ENCODE measurements at regions of chr22 and their contacts with region 1.

Region 1: DNA sequence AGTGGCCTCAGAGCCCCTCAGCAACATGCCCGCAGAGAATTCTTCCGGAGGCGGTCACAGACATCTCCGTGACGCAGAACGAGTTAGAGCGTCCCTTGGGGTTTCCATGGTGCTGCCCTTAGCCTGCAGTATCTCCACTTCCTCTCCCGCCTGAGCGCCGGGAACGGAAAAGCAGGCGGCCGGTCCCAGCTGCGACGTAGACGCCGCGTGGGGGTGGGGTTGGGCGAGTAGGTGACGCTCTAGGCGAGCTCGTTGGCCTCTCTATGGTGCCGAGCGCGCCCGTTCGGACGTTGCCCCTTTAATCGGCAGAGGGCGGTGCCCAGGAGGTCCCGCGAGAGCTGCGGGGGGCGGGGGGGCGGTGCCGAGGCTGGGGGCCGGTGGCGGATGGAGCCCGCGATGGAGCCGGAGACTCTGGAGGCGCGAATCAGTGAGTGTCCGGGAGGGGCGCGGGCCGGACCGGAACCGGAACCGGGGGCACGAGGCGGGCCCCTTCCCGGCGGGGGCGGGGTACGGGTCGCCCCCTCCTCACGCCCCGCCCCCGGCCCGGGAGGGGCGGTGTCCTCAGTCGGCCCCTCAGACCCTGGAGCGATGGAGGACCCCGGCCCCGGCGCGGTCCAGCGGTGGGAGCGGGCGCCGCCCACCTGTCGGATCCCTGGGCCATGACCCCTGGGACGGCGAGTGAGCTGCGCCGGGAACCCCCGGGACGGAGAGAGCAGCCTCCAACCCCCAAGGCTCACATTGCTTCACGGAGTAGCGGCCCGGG is at the start of gene GGA1:
- DNase-seq: peak; percentile 100
- H3K4me3 ChIP-seq: peak within 1 kb of the TSS; percentile 56 to 92 (median 84)
- H3K27ac ChIP-seq: peak within 1 kb of the TSS; percentile 81 to 87
- H3K4me1 ChIP-seq: peaks cover 10 to 50% (median 38%) of the 10 kb centered on the region in 4 experiments
- H3K27me3 ChIP-seq: no peaks in the 10 kb centered on the region

Region 2: GRCh38 chr22:37472418-37473006 is 136.1 kb before region 1 on chr22:
- CTCF ChIA-PET with region 1: no interaction called
- POLR2A ChIA-PET with region 1: no interaction called
- DNase-seq: peak in 2 of 3 donors; percentile 40 to 45
- H3K4me3 ChIP-seq: no peak overlapping the region
- H3K27ac ChIP-seq: no peak overlapping the region
- H3K4me1 ChIP-seq: no peaks in the 10 kb centered on the region
- H3K27me3 ChIP-seq: no peaks in the 10 kb centered on the region

Region 3: DNA sequence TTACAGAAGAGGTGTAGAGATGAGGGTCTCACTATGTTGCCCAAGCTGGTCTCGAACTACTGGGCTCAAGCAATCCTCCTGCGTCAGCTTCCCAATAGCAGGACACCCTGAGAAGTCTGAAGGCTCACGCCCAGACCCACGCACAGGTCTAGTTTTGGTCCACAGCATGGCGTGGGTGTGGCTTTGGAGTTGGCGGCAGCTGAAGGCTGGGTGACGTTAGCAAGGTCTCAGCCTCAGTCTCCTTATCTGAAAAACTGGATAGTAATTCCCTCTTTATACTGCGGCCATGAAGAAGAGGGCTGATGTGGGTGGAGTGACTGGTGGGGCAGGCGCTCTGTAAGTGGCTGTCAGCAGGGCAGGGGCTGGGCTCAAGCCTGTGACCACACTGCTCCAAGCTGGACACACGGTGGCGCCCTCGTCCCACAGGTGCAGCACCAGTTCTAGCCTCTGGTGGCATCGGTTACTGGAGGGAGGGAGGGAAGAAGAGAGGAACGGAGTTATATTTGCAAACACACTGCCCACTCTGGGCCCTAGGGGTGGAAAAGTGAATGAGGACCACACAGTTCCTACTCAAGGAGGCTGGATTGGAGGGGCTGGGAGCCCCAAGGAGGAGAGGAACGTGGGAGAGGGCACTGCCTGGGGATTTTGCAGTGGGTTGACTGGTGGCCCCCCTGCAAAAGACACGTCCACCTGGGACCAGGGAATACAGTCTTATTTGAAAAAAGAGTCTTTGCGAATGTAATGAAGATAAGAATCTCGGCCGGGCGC is 69.9 kb before region 1 on chr22:
- CTCF ChIA-PET with region 1: interaction called, 10 read pairs
- POLR2A ChIA-PET with region 1: no interaction called
- DNase-seq: peak; percentile 91 to 97 (median 96)
- H3K4me3 ChIP-seq: peak overlapping the region in 1 of 7 experiments; percentile 38
- H3K27ac ChIP-seq: no peak overlapping the region
- H3K4me1 ChIP-seq: peaks cover 4 to 40% (median 28%) of the 10 kb centered on the region in 4 experiments
- H3K27me3 ChIP-seq: peaks cover 0 to 16% (median 6%) of the 10 kb centered on the region in 5 experiments

Region 4: GRCh38 chr22:37581504-37581903 is 27.2 kb before region 1 on chr22:
- CTCF ChIA-PET with region 1: interaction called, 12 read pairs
- POLR2A ChIA-PET with region 1: no interaction called
- DNase-seq: peak in 1 of 3 donors; percentile 36
- H3K4me3 ChIP-seq: no peak overlapping the region
- H3K27ac ChIP-seq: no peak overlapping the region
- H3K4me1 ChIP-seq: peaks cover 5 to 28% (median 24%) of the 10 kb centered on the region in 4 experiments
- H3K27me3 ChIP-seq: peaks cover 0 to 5% (median 0%) of the 10 kb centered on the region in 5 experiments

Region 5: DNA sequence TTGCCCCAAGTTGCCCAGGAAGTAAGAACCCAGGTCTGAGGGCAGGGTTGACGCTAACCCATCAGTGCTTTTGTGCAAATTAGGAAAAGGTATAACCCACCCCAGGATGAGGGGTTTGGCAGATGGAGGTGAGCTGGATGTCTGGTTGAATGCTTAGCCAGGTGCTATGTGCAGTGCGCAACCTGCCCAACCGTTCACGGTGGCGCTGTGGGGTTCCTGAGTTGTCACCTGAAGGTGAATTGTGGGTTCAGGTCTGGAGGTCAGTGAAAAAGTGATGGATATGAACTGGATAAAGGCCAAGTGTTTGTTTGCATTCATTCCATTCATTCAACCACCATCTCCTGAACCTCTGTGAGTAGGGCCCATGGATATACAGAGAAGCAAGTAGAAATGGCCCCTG is 14.4 kb before region 1 on chr22:
- CTCF ChIA-PET with region 1: interaction called, 17 read pairs
- POLR2A ChIA-PET with region 1: interaction called, 6 read pairs
- DNase-seq: no peak
- H3K4me3 ChIP-seq: no peak overlapping the region
- H3K27ac ChIP-seq: no peak overlapping the region
- H3K4me1 ChIP-seq: peaks cover 0 to 11% (median 4%) of the 10 kb centered on the region in 4 experiments
- H3K27me3 ChIP-seq: no peaks in the 10 kb centered on the region

Region 6: GRCh38 chr22:37633625-37634416 is 25.2 kb after region 1 on chr22:
- CTCF ChIA-PET with region 1: interaction called, 622 read pairs
- POLR2A ChIA-PET with region 1: interaction called, 7 read pairs
- DNase-seq: peak; percentile 73 to 93 (median 91)
- H3K4me3 ChIP-seq: peak overlapping the region in 5 of 7 experiments; percentile 17 to 56 (median 45)
- H3K27ac ChIP-seq: peak overlapping the region in 1 of 2 experiments; percentile 86
- H3K4me1 ChIP-seq: peaks cover 3 to 92% (median 77%) of the 10 kb centered on the region in 4 experiments
- H3K27me3 ChIP-seq: no peaks in the 10 kb centered on the region